ENCODE measurements at regions of chr1 and their contacts with region 1.

Region 1: DNA sequence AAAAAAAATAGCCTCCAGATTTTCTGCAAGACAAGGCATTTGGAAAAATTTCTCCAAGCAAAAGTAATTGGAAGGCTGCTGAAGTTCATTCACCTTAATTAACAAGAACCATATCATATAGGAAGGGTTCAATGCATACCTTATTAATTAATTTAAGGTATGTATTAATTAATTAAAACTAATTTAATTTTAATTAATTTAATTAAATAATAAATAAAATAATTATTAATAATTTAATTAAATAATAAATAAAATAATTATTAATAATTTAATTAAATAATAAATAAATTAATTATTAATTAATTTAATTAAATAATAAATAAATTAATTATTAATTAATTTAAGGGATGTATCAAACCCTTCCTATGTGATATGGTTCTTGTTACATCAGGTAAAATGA is 7.9 kb downstream of the OR2L13 start:
- DNase-seq: no peak
- ATAC-seq: no peak
- H3K4me3 ChIP-seq: no peak overlapping the region
- H3K27ac ChIP-seq: no peak overlapping the region
- H3K4me1 ChIP-seq: no peaks in the 10 kb centered on the region
- H3K27me3 ChIP-seq: no peaks in the 10 kb centered on the region
- CTCF ChIP-seq: no peak
- POLR2A ChIP-seq: no peak
- RAD21 ChIP-seq: no peak

Region 2: GRCh38 chr1:248054671-248055070 is 48.2 kb before region 1 on chr1:
- CTCF ChIA-PET with region 1: no interaction called
- POLR2A ChIA-PET with region 1: no interaction called
- RAD21 ChIA-PET with region 1: no interaction called
- intact Hi-C with region 1: loop called (anchors 10 kb)
- DNase-seq: no peak
- ATAC-seq: no peak
- H3K4me3 ChIP-seq: no peak overlapping the region
- H3K27ac ChIP-seq: no peak overlapping the region
- H3K4me1 ChIP-seq: no peaks in the 10 kb centered on the region
- H3K27me3 ChIP-seq: no peaks in the 10 kb centered on the region
- CTCF ChIP-seq: no peak
- POLR2A ChIP-seq: no peak
- RAD21 ChIP-seq: no peak

Region 3: GRCh38 chr1:248155927-248156326 is 53.1 kb after region 1 on chr1:
- CTCF ChIA-PET with region 1: no interaction called
- POLR2A ChIA-PET with region 1: no interaction called
- RAD21 ChIA-PET with region 1: no interaction called
- intact Hi-C with region 1: loop called (anchors 10 kb)
- DNase-seq: no peak
- ATAC-seq: no peak
- H3K4me3 ChIP-seq: no peak overlapping the region
- H3K27ac ChIP-seq: no peak overlapping the region
- H3K4me1 ChIP-seq: no peaks in the 10 kb centered on the region
- H3K27me3 ChIP-seq: no peaks in the 10 kb centered on the region
- CTCF ChIP-seq: no peak
- POLR2A ChIP-seq: no peak
- RAD21 ChIP-seq: no peak

Region 4: DNA sequence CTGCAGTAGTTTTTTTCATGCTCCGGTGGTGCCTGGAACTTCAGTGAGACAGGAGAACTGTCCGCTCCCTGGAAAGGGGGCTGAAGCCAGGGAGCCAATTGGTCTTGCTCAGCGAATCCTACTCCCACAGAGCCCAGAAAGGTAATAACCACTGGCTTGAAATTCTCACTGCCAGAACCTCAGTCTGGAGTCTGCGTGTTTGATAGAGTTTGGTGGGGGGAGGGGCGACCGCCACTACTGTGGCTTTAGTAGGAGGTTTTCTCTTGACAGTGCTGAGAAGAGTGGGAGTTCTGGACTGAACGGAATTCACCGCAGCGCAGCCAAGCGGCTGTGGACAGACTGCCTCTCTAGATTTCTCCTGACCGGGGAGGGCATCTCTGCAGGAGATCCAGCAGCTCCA is 86.2 kb after region 1 on chr1:
- CTCF ChIA-PET with region 1: no interaction called
- POLR2A ChIA-PET with region 1: no interaction called
- RAD21 ChIA-PET with region 1: no interaction called
- intact Hi-C with region 1: no loop called
- DNase-seq: no peak
- ATAC-seq: no peak
- H3K4me3 ChIP-seq: no peak overlapping the region
- H3K27ac ChIP-seq: no peak overlapping the region
- H3K4me1 ChIP-seq: no peaks in the 10 kb centered on the region
- H3K27me3 ChIP-seq: no peaks in the 10 kb centered on the region
- CTCF ChIP-seq: no peak
- POLR2A ChIP-seq: no peak
- RAD21 ChIP-seq: no peak